ENCODE measurements at regions of chr3 and their contacts with region 1.

Region 1: GRCh38 chr3:44477312-44478030 is at the start of gene ZNF445:
- DNase-seq: peak; percentile 76
- ATAC-seq: peak; percentile 94
- H3K4me3 Mint-ChIP-seq: peak within 1 kb of the TSS; percentile 91
- H3K27ac Mint-ChIP-seq: peak within 1 kb of the TSS; percentile 61
- H3K4me1 Mint-ChIP-seq: peaks cover 25% of the 10 kb centered on the region
- H3K27me3 Mint-ChIP-seq: no peaks in the 10 kb centered on the region
- CTCF ChIP-seq: no peak
- total RNA-seq, gene ZNF445: 17.3 and 19.5 TPM in 2 replicates

Region 2: GRCh38 chr3:44439499-44440295 is 37.8 kb before region 1 on chr3:
- CTCF ChIA-PET with region 1: no interaction called
- POLR2A ChIA-PET with region 1: interaction called, 3 read pairs
- intact Hi-C with region 1: loop called (anchors 1 kb)
- DNase-seq: no peak
- ATAC-seq: peak; percentile 90
- H3K4me3 Mint-ChIP-seq: peak overlapping the region; percentile 66
- H3K27ac Mint-ChIP-seq: peak overlapping the region; percentile 92
- H3K4me1 Mint-ChIP-seq: peaks cover 21% of the 10 kb centered on the region
- H3K27me3 Mint-ChIP-seq: no peaks in the 10 kb centered on the region
- CTCF ChIP-seq: no peak

Region 3: DNA sequence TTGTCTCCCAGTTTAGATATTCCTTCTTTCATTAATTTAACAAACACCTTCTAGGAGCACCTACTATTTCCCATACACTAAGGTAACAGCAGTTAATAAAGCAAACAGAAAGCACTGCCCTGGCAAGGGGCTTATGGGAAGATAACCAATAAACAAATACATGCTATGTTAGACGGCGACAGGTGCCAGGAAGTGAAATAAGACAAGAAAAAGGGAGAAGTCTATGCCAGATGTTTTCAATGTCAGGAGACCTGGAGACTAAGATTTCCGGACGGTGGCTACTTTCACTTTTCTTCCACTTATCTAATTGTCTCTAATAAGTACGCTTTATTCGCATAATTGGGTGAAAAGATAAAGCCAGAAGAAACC is 32.5 kb after region 1 on chr3:
- CTCF ChIA-PET with region 1: interaction called, 4 read pairs
- POLR2A ChIA-PET with region 1: interaction called, 13 read pairs
- intact Hi-C with region 1: loop called (anchors 1 kb)
- DNase-seq: no peak
- ATAC-seq: peak; percentile 30
- H3K4me3 Mint-ChIP-seq: peak overlapping the region; percentile 95
- H3K27ac Mint-ChIP-seq: peak overlapping the region; percentile 92
- H3K4me1 Mint-ChIP-seq: peaks cover 40% of the 10 kb centered on the region
- H3K27me3 Mint-ChIP-seq: no peaks in the 10 kb centered on the region
- CTCF ChIP-seq: no peak

Region 4: DNA sequence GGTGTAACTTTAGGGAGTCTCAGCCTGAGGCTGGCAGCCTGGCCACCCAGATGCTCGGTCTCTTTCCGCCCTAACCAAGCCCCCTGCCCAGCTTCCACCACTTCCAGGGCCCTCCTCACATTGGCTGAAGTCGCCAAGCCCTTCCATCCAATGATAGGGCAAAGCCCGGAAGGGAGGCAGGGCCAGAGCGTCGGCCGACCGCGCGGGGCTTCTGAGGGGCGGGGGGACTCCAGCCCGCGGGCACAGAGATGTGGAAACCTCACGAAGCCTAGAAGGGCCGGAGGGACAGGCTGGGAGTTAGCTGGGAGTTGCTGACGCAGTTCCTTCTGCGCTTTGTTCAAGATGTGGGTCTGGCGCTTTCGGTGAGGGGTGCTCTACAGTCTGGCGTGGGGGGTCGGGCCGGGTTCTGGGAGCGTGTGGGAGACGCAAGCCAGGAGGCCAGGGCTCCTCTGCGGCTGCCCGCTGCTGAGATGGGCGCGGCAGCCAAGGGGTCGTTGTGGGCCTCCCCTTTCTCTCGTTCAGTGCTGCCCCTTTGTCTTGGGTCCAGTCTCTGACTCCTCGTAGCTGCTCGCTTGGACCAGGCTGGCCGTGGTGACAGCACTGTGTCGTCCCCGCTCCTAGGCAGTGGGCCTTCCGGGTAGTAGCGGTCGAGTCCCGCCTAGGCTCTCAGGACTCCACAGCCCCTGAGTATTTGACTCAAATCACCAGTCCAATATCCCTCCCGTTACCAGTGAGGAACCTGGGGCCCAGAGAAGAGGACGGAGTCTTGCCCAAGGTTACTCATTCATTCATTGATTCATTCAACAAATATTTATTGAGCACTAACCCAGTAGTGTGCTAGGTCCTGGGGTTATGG is 107.4 kb after region 1 on chr3 and contains the start of gene ZNF660:
- CTCF ChIA-PET with region 1: no interaction called
- POLR2A ChIA-PET with region 1: no interaction called
- intact Hi-C with region 1: loop called (anchors 2 kb)
- DNase-seq: peak; percentile 23
- ATAC-seq: peak; percentile 86
- H3K4me3 Mint-ChIP-seq: peak within 1 kb of the TSS; percentile 87
- H3K27ac Mint-ChIP-seq: peak within 1 kb of the TSS; percentile 15
- H3K4me1 Mint-ChIP-seq: peaks cover 17% of the 10 kb centered on the region
- H3K27me3 Mint-ChIP-seq: peaks cover 6% of the 10 kb centered on the region
- CTCF ChIP-seq: no peak
- total RNA-seq, gene ZNF660: 4.8 and 5.2 TPM in 2 replicates

Region 5: GRCh38 chr3:44685128-44685800 is 207.8 kb after region 1 on chr3:
- CTCF ChIA-PET with region 1: no interaction called
- POLR2A ChIA-PET with region 1: interaction called, 5 read pairs
- intact Hi-C with region 1: loop called (anchors 1 kb)
- DNase-seq: peak; percentile 56
- ATAC-seq: peak; percentile 92
- H3K4me3 Mint-ChIP-seq: peak overlapping the region; percentile 96
- H3K27ac Mint-ChIP-seq: peak overlapping the region; percentile 76
- H3K4me1 Mint-ChIP-seq: peaks cover 19% of the 10 kb centered on the region
- H3K27me3 Mint-ChIP-seq: peaks cover 23% of the 10 kb centered on the region
- CTCF ChIP-seq: no peak

Region 6: DNA sequence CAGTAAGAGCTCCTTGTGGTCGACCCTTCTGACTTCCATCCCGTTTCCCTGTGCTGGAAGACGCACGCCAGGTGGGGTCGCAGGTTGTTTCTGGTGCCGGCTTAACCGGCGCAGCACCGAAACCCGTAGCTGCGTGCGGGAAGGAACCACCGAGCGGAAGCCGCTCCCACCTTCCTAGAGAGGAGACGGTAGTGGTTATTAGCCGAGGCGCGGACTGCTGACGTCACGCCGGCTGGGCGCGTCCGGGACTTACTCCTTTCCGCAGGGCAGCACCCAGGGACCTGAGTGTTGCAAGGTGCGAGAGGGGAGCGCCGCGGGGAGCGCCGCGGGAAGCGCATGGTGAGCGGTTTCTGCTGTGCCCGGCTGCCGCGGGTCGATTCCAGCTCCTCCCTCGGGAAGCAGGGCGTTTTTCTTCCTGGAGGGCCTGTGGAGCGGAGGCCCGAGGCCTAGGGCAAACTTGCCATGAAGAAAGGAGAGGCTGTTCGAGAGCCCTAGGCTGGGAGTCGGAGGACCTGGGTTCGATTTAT is 252.0 kb after region 1 on chr3 and contains the start of gene ZNF501:
- CTCF ChIA-PET with region 1: no interaction called
- POLR2A ChIA-PET with region 1: no interaction called
- intact Hi-C with region 1: loop called (anchors 1 kb)
- DNase-seq: peak; percentile 80
- ATAC-seq: peak; percentile 98
- H3K4me3 Mint-ChIP-seq: peak within 1 kb of the TSS; percentile 92
- H3K27ac Mint-ChIP-seq: peak within 1 kb of the TSS; percentile 75
- H3K4me1 Mint-ChIP-seq: peaks cover 15% of the 10 kb centered on the region
- H3K27me3 Mint-ChIP-seq: no peaks in the 10 kb centered on the region
- CTCF ChIP-seq: no peak
- total RNA-seq, gene ZNF501: 6.2 and 6.5 TPM in 2 replicates

Measured in activated B cell treated with CpG ODN at 0.5 μM for 24 hours (primary cell).